ENCODE measurements at regions of chr1 and their contacts with region 1.

Region 1: DNA sequence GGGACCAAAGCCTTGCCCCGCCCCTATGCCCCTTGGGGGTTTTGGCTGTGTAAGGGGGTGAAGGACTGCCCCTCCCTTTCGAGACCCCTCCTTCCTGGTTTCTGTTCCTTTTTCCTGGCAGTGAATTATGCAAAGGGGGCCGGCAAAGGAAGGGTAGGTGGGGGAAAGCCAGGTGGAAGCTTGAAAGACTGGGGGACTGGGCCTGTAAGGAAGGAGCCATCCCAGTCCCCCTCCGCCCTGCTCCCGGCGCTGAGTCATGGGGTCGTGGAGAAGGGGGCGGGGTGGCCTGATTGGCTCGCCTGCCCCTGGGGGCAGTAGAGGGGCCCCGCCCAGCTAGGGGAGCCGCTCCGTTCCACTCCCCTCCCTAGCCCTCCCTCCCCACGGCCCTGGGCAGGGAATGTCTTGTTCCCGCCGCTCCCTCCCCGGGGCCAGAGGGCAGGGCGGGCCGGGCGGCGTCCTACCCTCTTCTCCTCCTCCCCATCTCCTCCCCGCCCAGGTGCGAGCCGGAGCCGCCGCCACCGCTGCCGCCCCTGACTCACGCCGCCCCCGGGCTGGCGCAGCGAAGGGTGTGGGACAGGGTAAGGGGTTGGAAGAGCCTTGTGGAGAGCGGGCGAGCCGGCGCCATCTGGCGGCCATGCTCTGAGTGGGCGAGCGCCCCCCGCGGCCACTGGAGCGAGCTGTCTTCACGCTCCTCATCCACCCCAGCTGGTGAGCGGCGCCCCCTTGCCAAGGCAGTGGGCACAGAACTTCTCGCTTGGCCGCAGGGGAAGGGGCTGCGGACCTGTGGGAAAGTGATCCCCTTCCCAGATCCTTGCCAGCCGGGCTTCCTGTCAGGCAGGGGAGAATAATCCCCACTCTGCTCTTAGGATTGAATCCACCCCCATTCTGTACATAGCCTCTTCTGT is 14.7 kb downstream of the ZBTB7B start:
- DNase-seq: peak; percentile 91 to 94 (median 94)
- H3K4me3 ChIP-seq: peak overlapping the region; percentile 4 to 68 (median 41)
- H3K27ac ChIP-seq: peak overlapping the region in 1 of 2 experiments; percentile 68
- H3K4me1 ChIP-seq: peaks cover 0 to 58% (median 48%) of the 10 kb centered on the region in 4 experiments
- H3K27me3 ChIP-seq: no peaks in the 10 kb centered on the region

Region 2: DNA sequence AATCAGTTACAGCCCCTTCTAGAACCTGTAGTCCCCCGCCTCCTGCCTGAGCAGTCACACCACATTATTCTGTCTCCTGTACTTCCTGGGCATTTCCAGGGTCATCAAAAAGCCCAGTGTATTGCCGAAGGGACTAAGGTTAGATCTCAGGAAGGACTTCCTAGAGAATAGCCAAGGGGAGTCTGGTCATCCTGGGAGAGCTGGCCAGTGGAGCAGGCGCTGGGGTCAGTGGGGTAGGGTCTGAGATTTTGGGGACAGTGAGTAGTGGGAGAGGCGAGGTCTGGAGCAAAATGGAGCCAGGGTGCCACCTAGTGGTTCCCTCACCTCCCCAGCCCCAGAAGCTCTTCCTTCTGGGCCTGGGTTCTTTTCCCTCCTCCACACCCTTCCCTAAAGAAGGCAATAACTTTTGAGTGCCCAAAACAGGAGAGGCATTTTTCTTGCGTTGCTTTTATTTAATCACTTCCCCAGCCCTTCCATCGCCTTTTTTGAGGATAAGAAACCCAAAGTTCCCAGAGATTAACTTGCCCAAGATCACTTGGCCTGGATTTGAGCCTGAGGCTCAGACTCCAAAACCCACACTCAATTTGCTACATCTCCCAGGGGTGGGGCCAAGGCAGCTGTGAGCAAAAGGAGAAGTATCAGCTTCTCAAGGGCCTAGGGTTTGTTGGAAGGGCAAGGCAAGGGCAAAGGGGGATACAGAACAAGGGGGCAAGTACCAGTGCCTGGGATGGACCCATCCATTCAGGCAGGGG is 73.5 kb before region 1 on chr1:
- CTCF ChIA-PET with region 1: interaction called, 10 read pairs
- POLR2A ChIA-PET with region 1: interaction called, 3 read pairs
- DNase-seq: peak; percentile 61 to 87 (median 85)
- H3K4me3 ChIP-seq: peak overlapping the region in 1 of 7 experiments; percentile 1
- H3K27ac ChIP-seq: peak overlapping the region in 1 of 2 experiments; percentile 77
- H3K4me1 ChIP-seq: peaks cover 12 to 74% (median 70%) of the 10 kb centered on the region in 4 experiments
- H3K27me3 ChIP-seq: no peaks in the 10 kb centered on the region

Region 3: DNA sequence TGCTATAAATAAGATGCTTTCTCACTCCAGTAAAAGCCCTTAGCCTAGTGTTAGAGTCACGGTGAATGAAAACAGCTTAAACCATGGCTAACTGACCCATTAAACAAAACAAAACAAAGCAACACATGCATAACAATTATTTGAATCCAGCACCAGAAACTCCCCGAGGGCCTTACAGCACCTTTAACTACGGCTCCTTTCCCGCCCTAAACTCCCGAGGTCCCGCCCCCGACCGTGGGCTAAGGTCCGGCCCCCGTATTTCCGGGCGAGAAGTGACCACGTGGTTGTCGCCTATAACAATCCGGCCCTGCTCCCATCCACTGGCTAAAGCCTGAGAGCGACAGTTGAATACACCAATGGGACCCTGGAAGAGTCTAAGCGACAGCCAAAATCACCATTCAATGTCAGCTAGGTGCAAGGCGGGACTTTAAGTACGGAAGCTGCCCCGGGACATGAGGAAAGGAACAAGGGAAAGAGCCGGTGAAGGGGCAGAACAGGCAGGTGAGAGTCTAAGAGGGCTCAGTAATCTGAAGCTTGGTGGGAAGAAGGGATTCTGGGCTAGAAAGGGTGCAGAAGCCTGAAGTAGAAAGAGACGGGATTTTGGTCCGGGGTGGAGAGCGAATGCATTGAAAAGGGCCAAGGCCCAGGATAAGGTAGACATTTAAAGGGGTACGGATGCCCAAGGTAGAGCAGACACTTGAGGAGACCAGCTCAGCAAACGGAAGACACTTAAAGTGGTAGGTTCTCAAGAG is 34.2 kb before region 1 on chr1 and contains the start of gene FLAD1:
- CTCF ChIA-PET with region 1: interaction called, 25 read pairs
- POLR2A ChIA-PET with region 1: no interaction called
- DNase-seq: peak; percentile 99 to 100 (median 99)
- H3K4me3 ChIP-seq: peak within 1 kb of the TSS; percentile 70 to 99 (median 81)
- H3K27ac ChIP-seq: peak within 1 kb of the TSS; percentile 76 to 83
- H3K4me1 ChIP-seq: peaks cover 13 to 28% (median 28%) of the 10 kb centered on the region in 4 experiments
- H3K27me3 ChIP-seq: no peaks in the 10 kb centered on the region

Region 4: DNA sequence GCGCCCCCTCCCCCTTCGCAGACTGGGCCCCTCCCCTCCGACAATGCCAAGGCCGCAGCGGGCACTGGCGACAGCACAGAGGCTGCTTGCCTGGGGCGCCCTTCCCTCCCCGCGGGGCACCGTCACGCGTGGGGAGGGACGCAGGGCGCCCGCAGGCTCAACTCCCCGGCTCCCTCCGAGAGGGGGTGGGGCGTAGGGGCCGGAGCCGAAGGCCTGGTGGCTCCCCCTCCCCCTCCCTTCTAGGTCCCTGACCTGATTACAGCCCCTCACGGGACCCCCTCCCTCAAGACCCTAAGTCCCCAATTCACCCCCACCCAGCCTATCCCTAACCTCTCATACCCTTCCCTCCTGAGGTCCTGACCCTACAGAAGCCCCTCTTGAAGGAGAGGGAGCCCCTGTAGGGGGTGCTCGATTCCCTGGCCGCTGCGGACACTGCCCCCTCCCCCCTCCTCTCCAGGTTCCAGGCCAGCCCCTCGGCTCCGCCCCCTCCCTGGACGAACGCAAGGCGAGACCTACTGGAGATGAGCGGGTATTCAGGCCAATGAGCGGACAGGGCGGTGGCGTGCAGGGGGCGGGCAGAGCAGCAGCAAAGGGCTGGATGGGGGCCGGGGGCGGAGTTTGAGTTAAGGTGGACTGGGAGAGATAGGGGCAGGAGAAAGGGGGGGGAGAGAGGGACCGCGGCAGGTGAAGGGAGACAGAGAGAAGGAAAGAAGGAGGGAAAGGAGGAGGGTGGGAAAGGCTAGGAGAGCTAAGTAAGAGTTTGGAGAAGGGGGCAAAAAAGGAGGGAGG is 15.4 kb before region 1 on chr1:
- CTCF ChIA-PET with region 1: interaction called, 233 read pairs
- POLR2A ChIA-PET with region 1: interaction called, 4 read pairs
- DNase-seq: peak; percentile 96 to 98 (median 98)
- H3K4me3 ChIP-seq: peak overlapping the region; percentile 39 to 95 (median 72)
- H3K27ac ChIP-seq: peak overlapping the region in 1 of 2 experiments; percentile 83
- H3K4me1 ChIP-seq: peaks cover 11 to 90% (median 88%) of the 10 kb centered on the region in 4 experiments
- H3K27me3 ChIP-seq: no peaks in the 10 kb centered on the region

Region 5: DNA sequence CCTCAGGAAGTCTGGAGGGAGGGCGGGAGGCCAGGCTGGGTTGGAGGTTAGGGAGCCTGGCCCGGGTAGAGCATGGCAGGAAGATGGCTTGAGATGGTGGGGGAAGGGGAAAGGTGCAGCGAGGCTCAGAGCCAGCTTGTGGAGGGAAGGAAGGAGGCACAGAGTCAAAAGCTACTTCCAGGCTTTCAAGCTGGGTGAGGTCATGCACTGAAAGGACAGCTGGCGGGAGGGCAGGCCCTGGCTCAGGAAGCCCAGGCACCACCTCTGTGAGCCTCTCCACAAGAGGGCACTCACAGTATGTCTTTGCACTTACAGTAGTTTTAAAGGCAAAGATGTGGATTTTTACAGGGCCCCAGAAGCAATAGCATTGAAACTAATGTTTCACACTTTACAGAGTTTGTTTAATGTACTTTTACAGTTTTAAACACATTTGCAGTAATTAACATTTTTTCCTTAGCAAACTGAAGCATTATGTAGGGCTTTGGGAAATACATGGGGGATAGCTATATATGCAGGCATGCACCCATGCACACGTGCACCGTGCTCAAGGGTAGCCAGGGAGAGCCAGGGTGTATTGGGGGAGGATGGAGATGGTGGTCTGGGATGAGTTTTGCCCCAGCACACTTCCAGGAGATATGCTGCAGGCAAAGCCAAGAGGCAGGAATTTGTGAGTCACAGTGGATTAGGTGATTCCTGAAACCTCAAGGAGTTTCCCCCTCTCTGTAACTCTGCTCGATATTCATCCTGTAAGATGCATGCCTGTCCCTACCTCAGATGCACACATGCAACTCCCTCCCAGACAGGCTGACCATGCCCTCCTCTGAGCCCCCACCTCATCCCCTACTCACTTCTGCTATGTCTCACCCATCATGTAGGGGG is 27.8 kb after region 1 on chr1:
- CTCF ChIA-PET with region 1: interaction called, 159 read pairs
- POLR2A ChIA-PET with region 1: interaction called, 3 read pairs
- DNase-seq: peak; percentile 78 to 91 (median 91)
- H3K4me3 ChIP-seq: no peak overlapping the region
- H3K27ac ChIP-seq: no peak overlapping the region
- H3K4me1 ChIP-seq: peaks cover 3 to 19% (median 13%) of the 10 kb centered on the region in 4 experiments
- H3K27me3 ChIP-seq: no peaks in the 10 kb centered on the region

Region 6: DNA sequence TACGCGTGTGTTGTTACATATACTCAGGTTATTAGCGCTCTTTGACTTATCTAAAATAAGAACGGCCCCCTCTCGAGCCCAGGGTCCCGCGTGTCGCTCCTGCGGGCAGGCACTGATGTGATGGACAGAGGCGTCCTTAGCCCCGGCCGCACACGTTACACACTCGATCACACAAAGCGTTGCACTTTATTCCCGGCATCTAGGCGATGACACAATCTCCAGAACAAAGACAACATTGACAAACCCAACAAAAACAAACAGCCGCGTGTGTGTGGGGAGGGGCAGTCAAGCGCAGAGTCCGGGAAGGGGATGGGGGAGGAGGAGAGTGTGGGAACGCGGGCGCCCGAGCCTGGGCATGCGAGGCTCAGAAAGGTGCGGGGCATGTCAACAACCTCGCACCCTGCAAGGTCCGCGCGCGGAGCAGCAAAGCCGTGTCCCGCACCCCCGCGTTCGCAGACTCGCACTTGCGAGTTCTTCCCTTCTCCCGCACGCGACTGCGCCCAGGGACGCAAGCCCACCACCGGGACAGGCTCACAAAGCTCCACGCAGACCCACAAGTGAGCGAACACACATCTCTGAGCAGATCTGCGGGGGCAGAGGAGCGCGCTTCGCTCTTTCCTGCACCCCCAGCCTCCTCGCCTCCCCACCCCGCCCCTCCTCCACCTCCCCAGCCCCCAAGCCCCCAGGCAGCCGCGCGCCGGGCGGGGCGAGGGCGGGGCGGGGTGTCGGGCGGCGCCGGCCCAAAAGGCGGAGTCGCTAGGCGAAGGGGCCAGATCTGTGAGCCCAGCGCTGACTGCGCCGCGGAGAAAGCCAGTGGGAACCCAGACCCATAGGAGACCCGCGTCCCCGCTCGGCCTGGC is 110.0 kb after region 1 on chr1 and contains the start of gene EFNA1:
- CTCF ChIA-PET with region 1: no interaction called
- POLR2A ChIA-PET with region 1: no interaction called
- DNase-seq: peak in 2 of 3 donors; percentile 42 to 56
- H3K4me3 ChIP-seq: peak within 1 kb of the TSS; percentile 47 to 89 (median 82)
- H3K27ac ChIP-seq: peak within 1 kb of the TSS in 1 of 2 experiments; percentile 78
- H3K4me1 ChIP-seq: peaks cover 9 to 54% (median 49%) of the 10 kb centered on the region in 4 experiments
- H3K27me3 ChIP-seq: peaks cover 0 to 9% (median 3%) of the 10 kb centered on the region in 5 experiments

Measured in common myeloid progenitor, CD34-positive (primary cell).